ENCODE measurements at regions of chr9 and their contacts with region 1.

Region 1: DNA sequence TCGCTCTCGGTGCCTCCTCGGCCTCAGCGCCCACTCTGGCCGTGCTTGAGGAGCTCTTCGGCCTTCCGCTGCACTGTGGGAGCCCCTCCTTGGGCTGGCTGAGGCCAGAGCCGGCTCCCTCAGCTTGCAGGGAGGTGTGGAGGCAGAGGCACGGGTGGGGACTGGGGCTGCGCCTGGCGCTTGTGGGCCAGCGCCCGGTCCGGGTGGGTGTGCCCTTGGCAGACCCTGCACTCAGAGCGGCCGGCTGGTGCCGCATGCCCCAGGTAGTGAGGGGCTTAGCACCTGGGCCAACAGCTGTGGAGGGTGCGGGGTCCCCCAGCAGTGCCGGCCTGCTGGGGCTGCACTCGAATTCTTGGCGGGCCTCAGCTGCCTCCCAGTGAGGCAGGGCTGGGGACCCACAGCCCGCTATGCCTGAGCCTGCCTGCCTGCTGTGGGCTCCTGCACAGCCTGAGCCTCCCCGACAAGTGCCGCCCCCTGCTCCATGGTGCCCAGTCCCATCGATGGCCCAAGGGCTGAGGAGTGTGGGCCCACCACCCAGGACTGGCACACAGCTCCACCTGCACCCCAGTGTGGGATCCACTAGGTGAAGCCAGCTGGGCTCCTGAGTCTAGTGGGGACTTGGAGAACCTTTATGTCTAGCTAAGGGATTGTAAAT is 2085.2 kb upstream of the ACO1 start:
- DNase-seq: peak in 1 of 14 experiments; percentile 9
- ATAC-seq: no peak
- H3K4me3 ChIP-seq: no peak overlapping the region
- H3K4me3 Mint-ChIP-seq: no peak overlapping the region
- H3K27ac ChIP-seq: no peak overlapping the region
- H3K27ac Mint-ChIP-seq: no peak overlapping the region
- H3K4me1 ChIP-seq: no peaks in the 10 kb centered on the region
- H3K4me1 Mint-ChIP-seq: no peaks in the 10 kb centered on the region
- H3K27me3 ChIP-seq: no peaks in the 10 kb centered on the region
- H3K27me3 Mint-ChIP-seq: no peaks in the 10 kb centered on the region
- CTCF ChIP-seq: no peak

Region 2: DNA sequence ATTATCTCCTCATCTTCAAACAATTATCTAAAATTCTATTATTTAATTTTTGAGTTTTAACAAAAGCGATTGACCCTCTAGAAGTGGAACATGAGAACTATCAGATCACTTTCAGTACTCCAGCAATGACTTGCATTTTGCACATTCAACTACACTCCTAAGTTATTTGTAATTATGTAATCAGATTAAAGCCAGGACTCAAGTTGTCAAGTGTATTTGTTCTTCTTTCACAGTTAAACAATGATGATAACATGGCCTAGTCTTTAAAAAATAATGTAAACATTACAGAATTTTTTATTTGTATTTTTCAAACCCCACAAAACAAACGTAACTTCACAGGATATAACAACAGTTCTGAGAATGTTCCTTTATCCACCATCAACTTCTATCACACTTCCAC is 63.7 kb before region 1 on chr9:
- CTCF ChIA-PET with region 1: no interaction called
- POLR2A ChIA-PET with region 1: no interaction called
- intact Hi-C with region 1: loop called in 1 of 2 experiments (anchors 10 kb)
- DNase-seq: no peak
- ATAC-seq: no peak
- H3K4me3 ChIP-seq: no peak overlapping the region
- H3K4me3 Mint-ChIP-seq: no peak overlapping the region
- H3K27ac ChIP-seq: no peak overlapping the region
- H3K27ac Mint-ChIP-seq: no peak overlapping the region
- H3K4me1 ChIP-seq: no peaks in the 10 kb centered on the region
- H3K4me1 Mint-ChIP-seq: no peaks in the 10 kb centered on the region
- H3K27me3 ChIP-seq: no peaks in the 10 kb centered on the region
- H3K27me3 Mint-ChIP-seq: no peaks in the 10 kb centered on the region
- CTCF ChIP-seq: no peak